Activated CD4-positive, alpha-beta T cell treated with anti-CD3 and anti-CD28 coated beads for 36 hours (primary cell): ENCODE measurements at regions of chr17 and their contacts with region 1.

Region 1: GRCh38 chr17:67212689-67213417 is 32.1 kb downstream of the HELZ start:
- DNase-seq: no peak
- ATAC-seq: no peak
- H3K4me3 Mint-ChIP-seq: no peak overlapping the region
- H3K27ac Mint-ChIP-seq: no peak overlapping the region
- H3K4me1 Mint-ChIP-seq: peaks cover 26% of the 10 kb centered on the region
- H3K27me3 Mint-ChIP-seq: no peaks in the 10 kb centered on the region

Region 2: GRCh38 chr17:67121316-67121887 is 91.5 kb before region 1 on chr17:
- CTCF ChIA-PET with region 1: no interaction called
- POLR2A ChIA-PET with region 1: no interaction called
- intact Hi-C with region 1: no loop called
- DNase-seq: no peak
- ATAC-seq: no peak
- H3K4me3 Mint-ChIP-seq: no peak overlapping the region
- H3K27ac Mint-ChIP-seq: no peak overlapping the region
- H3K4me1 Mint-ChIP-seq: peaks cover 5% of the 10 kb centered on the region
- H3K27me3 Mint-ChIP-seq: no peaks in the 10 kb centered on the region

Region 3: GRCh38 chr17:67157732-67158639 is 54.9 kb before region 1 on chr17:
- CTCF ChIA-PET with region 1: interaction called, 3 read pairs
- POLR2A ChIA-PET with region 1: interaction called, 3 read pairs
- intact Hi-C with region 1: loop called in 1 of 2 experiments (anchors 10 kb)
- DNase-seq: no peak
- ATAC-seq: no peak
- H3K4me3 Mint-ChIP-seq: no peak overlapping the region
- H3K27ac Mint-ChIP-seq: peak overlapping the region; percentile 1
- H3K4me1 Mint-ChIP-seq: peaks cover 15% of the 10 kb centered on the region
- H3K27me3 Mint-ChIP-seq: no peaks in the 10 kb centered on the region

Region 4: GRCh38 chr17:67725373-67725791 is 512.5 kb after region 1 on chr17:
- CTCF ChIA-PET with region 1: no interaction called
- POLR2A ChIA-PET with region 1: interaction called, 13 read pairs
- intact Hi-C with region 1: no loop called
- DNase-seq: no peak
- ATAC-seq: no peak
- H3K4me3 Mint-ChIP-seq: no peak overlapping the region
- H3K27ac Mint-ChIP-seq: peak overlapping the region; percentile 76
- H3K4me1 Mint-ChIP-seq: peaks cover 16% of the 10 kb centered on the region
- H3K27me3 Mint-ChIP-seq: no peaks in the 10 kb centered on the region